CD8-positive, alpha-beta T cell (primary cell): ENCODE measurements at regions of chr2 and their contacts with region 1.

Region 1: GRCh38 chr2:177385157-177385556 is 7.4 kb upstream of the AGPS start:
- DNase-seq: no peak
- ATAC-seq: no peak
- H3K4me3 ChIP-seq: no peak overlapping the region
- H3K4me3 Mint-ChIP-seq: no peak overlapping the region
- H3K27ac ChIP-seq: no peak overlapping the region
- H3K27ac Mint-ChIP-seq: no peak overlapping the region
- H3K4me1 ChIP-seq: no peaks in the 10 kb centered on the region
- H3K4me1 Mint-ChIP-seq: peaks cover 8% of the 10 kb centered on the region
- H3K27me3 ChIP-seq: no peaks in the 10 kb centered on the region
- H3K27me3 Mint-ChIP-seq: no peaks in the 10 kb centered on the region
- CTCF ChIP-seq: no peak

Region 2: GRCh38 chr2:177353187-177353478 is 32.0 kb before region 1 on chr2:
- CTCF ChIA-PET with region 1: no interaction called
- POLR2A ChIA-PET with region 1: no interaction called
- intact Hi-C with region 1: loop called in 1 of 2 experiments (anchors 5 kb)
- DNase-seq: no peak
- ATAC-seq: no peak
- H3K4me3 ChIP-seq: no peak overlapping the region
- H3K4me3 Mint-ChIP-seq: no peak overlapping the region
- H3K27ac ChIP-seq: no peak overlapping the region
- H3K27ac Mint-ChIP-seq: no peak overlapping the region
- H3K4me1 ChIP-seq: no peaks in the 10 kb centered on the region
- H3K4me1 Mint-ChIP-seq: peaks cover 8% of the 10 kb centered on the region
- H3K27me3 ChIP-seq: no peaks in the 10 kb centered on the region
- H3K27me3 Mint-ChIP-seq: no peaks in the 10 kb centered on the region
- CTCF ChIP-seq: no peak

Region 3: DNA sequence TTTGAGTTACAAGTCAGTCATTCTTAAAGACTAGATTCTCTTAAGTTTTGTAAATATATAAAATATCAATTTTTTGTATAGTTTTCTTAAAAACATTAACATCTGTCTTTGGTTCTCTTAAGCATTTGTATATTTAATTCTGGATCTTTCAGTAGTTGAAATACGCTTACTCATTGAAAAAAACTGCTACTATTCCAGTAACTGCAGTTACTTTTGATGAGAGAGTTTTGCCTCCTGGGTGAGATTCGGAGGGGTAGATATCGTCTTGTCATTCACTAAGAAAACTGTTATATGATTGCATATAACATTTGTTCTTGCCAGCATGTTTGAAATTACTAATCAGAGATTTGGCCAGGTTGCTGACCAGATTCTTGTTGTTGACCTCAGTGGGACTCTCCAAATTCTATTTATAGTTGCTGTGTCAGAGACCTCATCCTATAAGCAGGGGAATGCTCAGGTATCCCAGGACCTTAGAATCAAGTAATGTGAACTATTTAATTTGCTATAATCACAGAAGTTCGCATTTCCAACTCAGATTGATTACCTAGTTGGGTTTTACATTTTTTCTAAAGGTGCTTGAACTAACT is 15.3 kb after region 1 on chr2:
- CTCF ChIA-PET with region 1: no interaction called
- POLR2A ChIA-PET with region 1: no interaction called
- intact Hi-C with region 1: no loop called
- DNase-seq: no peak
- ATAC-seq: no peak
- H3K4me3 ChIP-seq: no peak overlapping the region
- H3K4me3 Mint-ChIP-seq: no peak overlapping the region
- H3K27ac ChIP-seq: no peak overlapping the region
- H3K27ac Mint-ChIP-seq: no peak overlapping the region
- H3K4me1 ChIP-seq: peaks cover 11% of the 10 kb centered on the region
- H3K4me1 Mint-ChIP-seq: peaks cover 74% of the 10 kb centered on the region
- H3K27me3 ChIP-seq: no peaks in the 10 kb centered on the region
- H3K27me3 Mint-ChIP-seq: no peaks in the 10 kb centered on the region
- CTCF ChIP-seq: no peak